B cell (primary cell): ENCODE measurements at regions of chr2 and their contacts with region 1.

Region 1: DNA sequence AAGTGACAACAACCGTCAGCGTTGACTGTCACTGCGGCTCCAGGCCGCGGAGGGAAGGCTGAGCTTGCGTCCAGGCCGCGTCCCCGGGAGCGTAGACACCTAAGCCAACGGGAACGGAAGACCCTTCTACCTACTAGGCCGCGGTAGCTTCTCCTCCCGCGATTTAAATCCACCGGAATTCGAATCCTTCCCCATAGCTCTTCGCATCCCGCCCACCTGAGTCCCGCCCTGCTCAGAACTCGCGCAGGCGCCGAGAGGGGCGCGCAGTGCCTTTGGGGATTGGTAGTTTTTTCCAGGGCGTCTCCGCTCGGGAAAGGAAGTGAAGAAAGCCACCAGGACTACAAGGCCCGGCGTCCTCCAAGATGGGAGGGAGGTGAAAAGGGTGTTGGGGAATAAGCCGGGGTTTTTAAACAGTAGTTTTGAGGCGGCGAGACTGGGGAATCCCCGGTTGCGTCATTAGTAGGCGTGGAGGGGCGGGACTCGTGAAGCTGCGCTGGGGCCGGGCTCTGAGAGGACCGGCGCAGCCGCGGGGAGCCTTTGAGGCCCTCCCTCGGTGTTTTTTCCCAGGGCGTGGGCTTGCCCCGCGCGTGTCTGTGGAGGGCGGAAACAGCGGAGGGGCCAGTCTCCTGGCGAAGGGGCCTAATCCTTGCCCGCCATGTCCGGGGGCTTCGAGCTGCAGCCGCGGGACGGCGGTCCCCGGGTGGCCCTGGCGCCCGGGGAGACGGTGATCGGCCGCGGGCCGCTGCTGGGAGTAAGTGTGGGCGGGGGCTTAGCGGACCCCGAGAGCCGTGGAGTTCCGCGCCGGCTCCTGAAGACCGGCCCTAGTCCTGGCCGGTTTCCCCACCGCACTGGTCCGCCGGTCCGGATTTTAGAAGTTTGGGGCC is at the starts of genes APLF and FBXO48:
- DNase-seq: peak; percentile 98
- ATAC-seq: peak; percentile 91
- H3K4me3 ChIP-seq: peak within 1 kb of the TSS; percentile 72 to 98 (median 90)
- H3K4me3 Mint-ChIP-seq: peak within 1 kb of the TSS; percentile 97
- H3K27ac ChIP-seq: peak within 1 kb of the TSS; percentile 85 to 97
- H3K27ac Mint-ChIP-seq: peak within 1 kb of the TSS; percentile 96
- H3K4me1 ChIP-seq: peaks cover 11 to 15% of the 10 kb centered on the region in 2 donors
- H3K4me1 Mint-ChIP-seq: peaks cover 28% of the 10 kb centered on the region
- H3K27me3 ChIP-seq: no peaks in the 10 kb centered on the region
- H3K27me3 Mint-ChIP-seq: no peaks in the 10 kb centered on the region
- CTCF ChIP-seq: no peak
- total RNA-seq, gene APLF: 6.3 and 7.4 TPM in 2 replicates
- total RNA-seq, gene FBXO48: 3.2 TPM in 2 replicates

Region 2: GRCh38 chr2:68251187-68251854 is 216.0 kb before region 1 on chr2:
- CTCF ChIA-PET with region 1: no interaction called
- POLR2A ChIA-PET with region 1: interaction called, 5 read pairs
- intact Hi-C with region 1: loop called (anchors 1 kb)
- DNase-seq: peak; percentile 92
- ATAC-seq: peak; percentile 60
- H3K4me3 ChIP-seq: peak overlapping the region; percentile 76 to 97 (median 96)
- H3K4me3 Mint-ChIP-seq: peak overlapping the region; percentile 90
- H3K27ac ChIP-seq: peak overlapping the region; percentile 86 to 92
- H3K27ac Mint-ChIP-seq: peak overlapping the region; percentile 93
- H3K4me1 ChIP-seq: peaks cover 39 to 55% of the 10 kb centered on the region in 2 donors
- H3K4me1 Mint-ChIP-seq: peaks cover 36% of the 10 kb centered on the region
- H3K27me3 ChIP-seq: no peaks in the 10 kb centered on the region
- H3K27me3 Mint-ChIP-seq: no peaks in the 10 kb centered on the region
- CTCF ChIP-seq: peak; percentile 77

Region 3: GRCh38 chr2:68516051-68516955 is 49.0 kb after region 1 on chr2:
- CTCF ChIA-PET with region 1: no interaction called
- POLR2A ChIA-PET with region 1: no interaction called
- intact Hi-C with region 1: no loop called
- DNase-seq: no peak
- ATAC-seq: no peak
- H3K4me3 ChIP-seq: no peak overlapping the region
- H3K4me3 Mint-ChIP-seq: no peak overlapping the region
- H3K27ac ChIP-seq: no peak overlapping the region
- H3K27ac Mint-ChIP-seq: no peak overlapping the region
- H3K4me1 ChIP-seq: no peaks in the 10 kb centered on the region
- H3K4me1 Mint-ChIP-seq: no peaks in the 10 kb centered on the region
- H3K27me3 ChIP-seq: no peaks in the 10 kb centered on the region
- H3K27me3 Mint-ChIP-seq: no peaks in the 10 kb centered on the region
- CTCF ChIP-seq: no peak

Region 4: GRCh38 chr2:68689553-68690537 is 222.5 kb after region 1 on chr2:
- CTCF ChIA-PET with region 1: interaction called, 5 read pairs
- POLR2A ChIA-PET with region 1: no interaction called
- intact Hi-C with region 1: loop called (anchors 1 kb)
- DNase-seq: peak; percentile 80
- ATAC-seq: peak; percentile 81
- H3K4me3 ChIP-seq: peak overlapping the region in 4 of 5 experiments; percentile 8 to 50 (median 22)
- H3K4me3 Mint-ChIP-seq: peak overlapping the region; percentile 65
- H3K27ac ChIP-seq: peak overlapping the region; percentile 39 to 62
- H3K27ac Mint-ChIP-seq: peak overlapping the region; percentile 84
- H3K4me1 ChIP-seq: peaks cover 35 to 36% of the 10 kb centered on the region in 2 donors
- H3K4me1 Mint-ChIP-seq: peaks cover 40% of the 10 kb centered on the region
- H3K27me3 ChIP-seq: no peaks in the 10 kb centered on the region
- H3K27me3 Mint-ChIP-seq: no peaks in the 10 kb centered on the region
- CTCF ChIP-seq: no peak

Region 5: DNA sequence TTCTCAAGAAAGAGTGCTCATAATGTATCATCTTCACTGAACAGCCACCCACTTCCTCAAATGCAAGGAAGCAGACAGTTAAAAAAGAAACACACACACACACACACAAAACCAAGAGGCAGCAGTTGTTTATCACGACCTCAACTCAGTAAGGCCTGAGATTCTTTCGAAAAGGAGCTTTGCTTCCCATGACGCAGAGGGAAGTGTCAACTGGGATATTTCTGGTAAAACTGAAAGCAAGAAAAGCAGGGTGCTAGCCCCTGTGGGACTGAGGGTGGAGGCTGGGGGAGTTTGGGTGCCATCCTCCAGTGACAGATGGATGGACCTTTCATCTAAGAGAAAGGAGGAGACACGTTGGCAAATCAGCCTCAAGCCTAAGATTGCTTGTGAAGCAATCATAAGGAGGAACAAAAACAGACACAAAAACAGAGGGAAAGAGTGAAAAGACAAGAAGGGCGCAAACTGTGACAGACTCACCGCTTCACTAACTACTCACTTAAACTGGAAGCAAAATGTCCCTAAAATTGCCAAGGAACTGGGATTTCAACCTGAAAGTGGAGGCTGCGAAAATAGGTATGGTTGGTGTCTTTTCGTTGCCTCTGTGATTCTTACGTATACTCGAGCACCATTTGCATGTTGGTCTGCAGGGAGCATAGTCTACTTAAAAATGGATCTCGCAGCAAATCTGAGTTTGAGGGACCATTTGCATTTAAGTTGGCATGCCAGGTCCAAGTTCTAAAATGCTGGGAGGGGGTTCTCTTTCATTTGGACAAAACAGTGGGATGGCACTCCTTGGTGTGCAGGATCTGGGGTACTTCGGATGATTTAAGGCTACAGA is 267.6 kb after region 1 on chr2 and contains the start of gene ARHGAP25:
- CTCF ChIA-PET with region 1: interaction called, 5 read pairs
- POLR2A ChIA-PET with region 1: no interaction called
- intact Hi-C with region 1: loop called (anchors 1 kb)
- DNase-seq: peak; percentile 83
- ATAC-seq: peak; percentile 78
- H3K4me3 ChIP-seq: peak within 1 kb of the TSS; percentile 47 to 92 (median 64)
- H3K4me3 Mint-ChIP-seq: no peak within 1 kb of the TSS
- H3K27ac ChIP-seq: peak within 1 kb of the TSS; percentile 93
- H3K27ac Mint-ChIP-seq: no peak within 1 kb of the TSS
- H3K4me1 ChIP-seq: peaks cover 66 to 77% of the 10 kb centered on the region in 2 donors
- H3K4me1 Mint-ChIP-seq: peaks cover 55% of the 10 kb centered on the region
- H3K27me3 ChIP-seq: no peaks in the 10 kb centered on the region
- H3K27me3 Mint-ChIP-seq: no peaks in the 10 kb centered on the region
- CTCF ChIP-seq: no peak
- total RNA-seq, gene ARHGAP25: 207 and 221 TPM in 2 replicates

Region 6: GRCh38 chr2:68837164-68837860 is 370.0 kb after region 1 on chr2:
- CTCF ChIA-PET with region 1: interaction called, 8 read pairs
- POLR2A ChIA-PET with region 1: no interaction called
- intact Hi-C with region 1: loop called (anchors 2 kb)
- DNase-seq: peak; percentile 78
- ATAC-seq: peak; percentile 46
- H3K4me3 ChIP-seq: peak overlapping the region in 1 of 5 experiments; percentile 8
- H3K4me3 Mint-ChIP-seq: peak overlapping the region; percentile 26
- H3K27ac ChIP-seq: no peak overlapping the region
- H3K27ac Mint-ChIP-seq: peak overlapping the region; percentile 75
- H3K4me1 ChIP-seq: peaks cover 42 to 47% of the 10 kb centered on the region in 2 donors
- H3K4me1 Mint-ChIP-seq: peaks cover 54% of the 10 kb centered on the region
- H3K27me3 ChIP-seq: no peaks in the 10 kb centered on the region
- H3K27me3 Mint-ChIP-seq: no peaks in the 10 kb centered on the region
- CTCF ChIP-seq: peak; percentile 82

Region 7: GRCh38 chr2:69306822-69307578 is 839.7 kb after region 1 on chr2:
- CTCF ChIA-PET with region 1: interaction called, 22 read pairs
- POLR2A ChIA-PET with region 1: no interaction called
- intact Hi-C with region 1: no loop called
- DNase-seq: peak; percentile 80
- ATAC-seq: peak; percentile 89
- H3K4me3 ChIP-seq: peak overlapping the region; percentile 48 to 69 (median 64)
- H3K4me3 Mint-ChIP-seq: peak overlapping the region; percentile 87
- H3K27ac ChIP-seq: no peak overlapping the region
- H3K27ac Mint-ChIP-seq: peak overlapping the region; percentile 32
- H3K4me1 ChIP-seq: peaks cover 19 to 39% of the 10 kb centered on the region in 2 donors
- H3K4me1 Mint-ChIP-seq: peaks cover 39% of the 10 kb centered on the region
- H3K27me3 ChIP-seq: peaks cover 0 to 29% (median 15%) of the 10 kb centered on the region in 4 experiments
- H3K27me3 Mint-ChIP-seq: peaks cover 26% of the 10 kb centered on the region
- CTCF ChIP-seq: peak; percentile 77

Region 8: GRCh38 chr2:69829256-69830046 is 1362.1 kb after region 1 on chr2 and contains the start of gene GMCL1:
- CTCF ChIA-PET with region 1: no interaction called
- POLR2A ChIA-PET with region 1: no interaction called
- intact Hi-C with region 1: loop called (anchors 2 kb)
- DNase-seq: peak; percentile 99
- ATAC-seq: peak; percentile 96
- H3K4me3 ChIP-seq: peak within 1 kb of the TSS; percentile 46 to 97 (median 72)
- H3K4me3 Mint-ChIP-seq: peak within 1 kb of the TSS; percentile 99
- H3K27ac ChIP-seq: peak within 1 kb of the TSS; percentile 94 to 98
- H3K27ac Mint-ChIP-seq: peak within 1 kb of the TSS; percentile 99
- H3K4me1 ChIP-seq: peaks cover 24 to 26% of the 10 kb centered on the region in 2 donors
- H3K4me1 Mint-ChIP-seq: peaks cover 38% of the 10 kb centered on the region
- H3K27me3 ChIP-seq: no peaks in the 10 kb centered on the region
- H3K27me3 Mint-ChIP-seq: no peaks in the 10 kb centered on the region
- CTCF ChIP-seq: no peak
- total RNA-seq, gene GMCL1: 22.0 and 26.3 TPM in 2 replicates